ENCODE measurements at regions of chr6 and their contacts with region 1.

Region 1: GRCh38 chr6:151004415-151005024 is 139.0 kb downstream of the MTHFD1L start:
- DNase-seq: peak; percentile 93
- H3K4me3 ChIP-seq: peak overlapping the region; percentile 16
- H3K27ac ChIP-seq: peak overlapping the region; percentile 89
- H3K4me1 ChIP-seq: peaks cover 69% of the 10 kb centered on the region
- H3K27me3 ChIP-seq: no peaks in the 10 kb centered on the region
- CTCF ChIP-seq: no peak

Region 2: DNA sequence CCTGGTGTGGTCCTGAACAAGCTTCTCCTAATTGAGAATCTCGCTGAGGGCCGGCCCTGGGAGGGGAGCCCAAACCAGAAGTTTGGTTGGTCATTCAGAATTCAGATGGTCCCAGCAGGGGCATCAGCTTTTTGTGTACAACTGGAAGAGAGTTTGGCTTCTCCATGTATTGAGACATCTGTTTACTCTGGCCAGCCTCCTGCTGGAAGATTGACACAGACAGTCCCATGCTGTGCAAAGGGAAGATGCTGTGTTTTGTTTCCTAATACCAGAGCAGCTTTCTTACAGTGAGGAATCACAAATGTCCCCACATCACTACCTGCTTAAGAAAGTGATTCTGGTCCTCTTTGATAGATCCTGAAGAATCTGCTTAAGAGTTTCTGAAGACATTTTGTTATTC is 307.0 kb before region 1 on chr6:
- CTCF ChIA-PET with region 1: no interaction called
- POLR2A ChIA-PET with region 1: no interaction called
- intact Hi-C with region 1: no loop called
- DNase-seq: peak; percentile 44
- H3K4me3 ChIP-seq: no peak overlapping the region
- H3K27ac ChIP-seq: no peak overlapping the region
- H3K4me1 ChIP-seq: peaks cover 36% of the 10 kb centered on the region
- H3K27me3 ChIP-seq: no peaks in the 10 kb centered on the region
- CTCF ChIP-seq: no peak

Region 3: DNA sequence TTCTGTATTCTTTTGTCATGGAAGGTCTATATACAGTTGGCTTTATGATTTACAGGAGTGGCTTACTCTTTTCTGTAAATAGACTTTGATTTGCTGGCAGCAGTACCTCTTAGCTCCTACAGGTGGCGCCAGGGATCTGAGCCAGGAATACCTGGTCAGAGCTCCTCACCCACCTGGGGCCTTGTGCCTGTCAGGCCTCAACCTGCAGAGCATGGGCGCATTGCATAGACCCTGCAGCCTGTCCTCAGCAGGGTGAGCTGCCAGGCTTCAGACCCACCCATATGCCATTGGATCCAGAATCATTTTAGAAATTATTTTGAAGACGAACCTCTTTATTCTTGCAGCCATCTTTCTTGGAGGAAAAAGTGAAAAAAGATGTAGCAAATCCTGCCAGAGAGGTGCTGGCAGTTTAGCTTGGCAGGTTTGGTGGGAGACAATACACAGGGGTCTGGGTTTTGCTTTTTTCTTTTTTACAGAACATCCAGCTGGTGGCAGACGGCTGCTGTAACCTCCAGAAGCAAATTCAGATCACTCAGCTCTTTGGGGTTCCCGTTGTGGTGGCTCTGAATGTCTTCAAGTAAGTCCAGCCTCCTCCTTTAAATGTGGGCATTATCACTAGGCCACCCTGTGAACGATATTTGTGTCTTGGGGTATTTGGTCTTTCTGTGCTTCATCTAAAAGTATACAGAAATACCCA is 10.0 kb after region 1 on chr6:
- CTCF ChIA-PET with region 1: interaction called, 11 read pairs
- POLR2A ChIA-PET with region 1: no interaction called
- intact Hi-C with region 1: no loop called
- DNase-seq: peak; percentile 56
- H3K4me3 ChIP-seq: no peak overlapping the region
- H3K27ac ChIP-seq: no peak overlapping the region
- H3K4me1 ChIP-seq: peaks cover 3% of the 10 kb centered on the region
- H3K27me3 ChIP-seq: no peaks in the 10 kb centered on the region
- CTCF ChIP-seq: peak; percentile 96

Region 4: GRCh38 chr6:151036869-151037680 is 32.6 kb after region 1 on chr6:
- CTCF ChIA-PET with region 1: no interaction called
- POLR2A ChIA-PET with region 1: no interaction called
- intact Hi-C with region 1: loop called (anchors 2 kb)
- DNase-seq: no peak
- H3K4me3 ChIP-seq: no peak overlapping the region
- H3K27ac ChIP-seq: no peak overlapping the region
- H3K4me1 ChIP-seq: peaks cover 7% of the 10 kb centered on the region
- H3K27me3 ChIP-seq: no peaks in the 10 kb centered on the region
- CTCF ChIP-seq: no peak

Region 5: GRCh38 chr6:151765444-151765886 is 760.9 kb after region 1 on chr6:
- CTCF ChIA-PET with region 1: no interaction called
- POLR2A ChIA-PET with region 1: no interaction called
- intact Hi-C with region 1: no loop called
- DNase-seq: peak; percentile 81
- H3K4me3 ChIP-seq: peak overlapping the region; percentile 12
- H3K27ac ChIP-seq: no peak overlapping the region
- H3K4me1 ChIP-seq: peaks cover 5% of the 10 kb centered on the region
- H3K27me3 ChIP-seq: peaks cover 25% of the 10 kb centered on the region
- CTCF ChIP-seq: peak; percentile 80

Measured in A673 (cell line).